PC-9 (cell line): ENCODE measurements at regions of chr9 and their contacts with region 1.

Region 1: GRCh38 chr9:131237931-131238401 is 38.3 kb downstream of the FAM78A start:
- DNase-seq: peak; percentile 26 to 53
- H3K4me3 ChIP-seq: no peak overlapping the region
- H3K27ac ChIP-seq: no peak overlapping the region
- H3K4me1 ChIP-seq: no peaks in the 10 kb centered on the region
- H3K27me3 ChIP-seq: no peaks in the 10 kb centered on the region
- CTCF ChIP-seq: no peak

Region 2: DNA sequence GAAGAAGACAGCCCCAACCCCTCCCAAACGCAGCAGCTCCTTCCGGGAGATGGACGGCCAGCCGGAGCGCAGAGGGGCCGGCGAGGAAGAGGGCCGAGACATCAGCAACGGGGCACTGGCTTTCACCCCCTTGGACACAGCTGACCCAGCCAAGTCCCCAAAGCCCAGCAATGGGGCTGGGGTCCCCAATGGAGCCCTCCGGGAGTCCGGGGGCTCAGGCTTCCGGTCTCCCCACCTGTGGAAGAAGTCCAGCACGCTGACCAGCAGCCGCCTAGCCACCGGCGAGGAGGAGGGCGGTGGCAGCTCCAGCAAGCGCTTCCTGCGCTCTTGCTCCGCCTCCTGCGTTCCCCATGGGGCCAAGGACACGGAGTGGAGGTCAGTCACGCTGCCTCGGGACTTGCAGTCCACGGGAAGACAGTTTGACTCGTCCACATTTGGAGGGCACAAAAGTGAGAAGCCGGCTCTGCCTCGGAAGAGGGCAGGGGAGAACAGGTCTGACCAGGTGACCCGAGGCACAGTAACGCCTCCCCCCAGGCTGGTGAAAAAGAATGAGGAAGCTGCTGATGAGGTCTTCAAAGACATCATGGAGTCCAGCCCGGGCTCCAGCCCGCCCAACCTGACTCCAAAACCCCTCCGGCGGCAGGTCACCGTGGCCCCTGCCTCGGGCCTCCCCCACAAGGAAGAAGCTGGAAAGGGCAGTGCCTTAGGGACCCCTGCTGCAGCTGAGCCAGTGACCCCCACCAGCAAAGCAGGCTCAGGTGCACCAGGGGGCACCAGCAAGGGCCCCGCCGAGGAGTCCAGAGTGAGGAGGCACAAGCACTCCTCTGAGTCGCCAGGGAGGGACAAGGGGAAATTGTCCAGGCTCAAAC is 353.6 kb before region 1 on chr9:
- CTCF ChIA-PET with region 1: interaction called, 10 read pairs
- POLR2A ChIA-PET with region 1: no interaction called
- intact Hi-C with region 1: no loop called
- DNase-seq: no peak
- H3K4me3 ChIP-seq: no peak overlapping the region
- H3K27ac ChIP-seq: no peak overlapping the region
- H3K4me1 ChIP-seq: no peaks in the 10 kb centered on the region
- H3K27me3 ChIP-seq: no peaks in the 10 kb centered on the region
- CTCF ChIP-seq: no peak

Region 3: GRCh38 chr9:131282688-131283422 is 44.9 kb after region 1 on chr9:
- CTCF ChIA-PET with region 1: no interaction called
- POLR2A ChIA-PET with region 1: no interaction called
- intact Hi-C with region 1: no loop called
- DNase-seq: no peak
- H3K4me3 ChIP-seq: no peak overlapping the region
- H3K27ac ChIP-seq: no peak overlapping the region
- H3K4me1 ChIP-seq: no peaks in the 10 kb centered on the region
- H3K27me3 ChIP-seq: peaks cover 36% of the 10 kb centered on the region
- CTCF ChIP-seq: no peak

Region 4: GRCh38 chr9:131330814-131331600 is 93.0 kb after region 1 on chr9:
- CTCF ChIA-PET with region 1: no interaction called
- POLR2A ChIA-PET with region 1: no interaction called
- intact Hi-C with region 1: no loop called
- DNase-seq: no peak
- H3K4me3 ChIP-seq: no peak overlapping the region
- H3K27ac ChIP-seq: no peak overlapping the region
- H3K4me1 ChIP-seq: peaks cover 14% of the 10 kb centered on the region
- H3K27me3 ChIP-seq: no peaks in the 10 kb centered on the region
- CTCF ChIP-seq: no peak